A673 (cell line): ENCODE measurements at regions of chr19 and their contacts with region 1.

Region 1: GRCh38 chr19:956766-957441 is 27.2 kb upstream of the WDR18 start:
- DNase-seq: peak; percentile 61
- H3K4me3 ChIP-seq: no peak overlapping the region
- H3K27ac ChIP-seq: no peak overlapping the region
- H3K4me1 ChIP-seq: peaks cover 18% of the 10 kb centered on the region
- H3K27me3 ChIP-seq: no peaks in the 10 kb centered on the region
- CTCF ChIP-seq: no peak

Region 2: GRCh38 chr19:977058-977692 is 20.3 kb after region 1 on chr19:
- CTCF ChIA-PET with region 1: no interaction called
- POLR2A ChIA-PET with region 1: interaction called, 11 read pairs
- intact Hi-C with region 1: no loop called
- DNase-seq: no peak
- H3K4me3 ChIP-seq: no peak overlapping the region
- H3K27ac ChIP-seq: no peak overlapping the region
- H3K4me1 ChIP-seq: no peaks in the 10 kb centered on the region
- H3K27me3 ChIP-seq: no peaks in the 10 kb centered on the region
- CTCF ChIP-seq: no peak